Activated CD4-positive, alpha-beta T cell treated with anti-CD3 and anti-CD28 coated beads for 36 hours (primary cell): ENCODE measurements at regions of chr17 and their contacts with region 1.

Region 1: DNA sequence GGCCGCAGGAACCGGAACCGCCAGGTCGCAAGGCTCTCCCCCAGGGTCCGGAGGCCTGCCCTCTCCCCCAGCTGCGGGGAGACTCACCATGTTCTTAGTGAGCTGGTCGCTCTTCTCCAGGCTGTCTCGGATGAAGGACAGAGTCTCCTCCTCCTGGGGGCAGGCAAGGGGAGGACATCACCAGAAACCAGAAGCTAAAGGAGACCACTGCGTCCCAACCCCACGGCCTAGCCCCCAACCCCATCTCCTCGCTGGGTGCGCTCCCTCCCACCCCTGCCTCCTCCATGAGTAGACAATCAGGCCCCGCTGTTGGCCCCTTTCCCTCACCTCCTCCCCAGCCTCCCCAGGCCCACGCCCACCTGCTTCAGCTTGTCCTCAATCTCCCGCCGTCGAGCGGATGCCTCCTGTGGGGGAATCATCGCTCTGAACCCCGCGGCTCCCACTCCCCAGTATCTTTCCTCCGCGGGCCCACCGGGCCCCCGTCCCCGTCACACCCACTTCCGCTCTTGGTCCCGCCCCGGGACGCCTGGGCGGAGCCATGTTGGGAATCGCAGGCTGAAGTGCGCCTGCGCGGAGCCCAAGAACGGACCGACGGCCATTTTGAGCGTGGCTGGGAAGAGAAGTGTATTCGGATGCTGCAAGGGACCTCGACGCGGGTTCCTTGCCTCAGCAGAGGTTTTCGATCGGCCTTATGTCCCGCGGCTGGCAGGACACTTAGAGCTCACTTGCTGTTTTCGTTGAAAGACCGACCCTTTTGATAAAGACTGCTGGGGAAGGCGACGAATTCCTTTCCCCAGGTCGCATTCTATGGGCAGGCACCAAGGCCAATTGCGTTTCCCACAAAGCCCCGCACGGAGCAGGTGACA is at the start of gene EXOC7:
- DNase-seq: peak; percentile 96
- ATAC-seq: peak; percentile 94
- H3K4me3 Mint-ChIP-seq: peak within 1 kb of the TSS; percentile 90
- H3K27ac Mint-ChIP-seq: peak within 1 kb of the TSS; percentile 93
- H3K4me1 Mint-ChIP-seq: peaks cover 18% of the 10 kb centered on the region
- H3K27me3 Mint-ChIP-seq: no peaks in the 10 kb centered on the region
- total RNA-seq, gene EXOC7: 73.0 to 77.0 TPM

Region 2: GRCh38 chr17:76036497-76037261 is 66.8 kb before region 1 on chr17:
- CTCF ChIA-PET with region 1: no interaction called
- POLR2A ChIA-PET with region 1: no interaction called
- intact Hi-C with region 1: no loop called
- DNase-seq: no peak
- ATAC-seq: no peak
- H3K4me3 Mint-ChIP-seq: no peak overlapping the region
- H3K27ac Mint-ChIP-seq: no peak overlapping the region
- H3K4me1 Mint-ChIP-seq: peaks cover 3% of the 10 kb centered on the region
- H3K27me3 Mint-ChIP-seq: no peaks in the 10 kb centered on the region

Region 3: GRCh38 chr17:76501018-76501826 is 397.7 kb after region 1 on chr17 and contains the start of gene RHBDF2:
- CTCF ChIA-PET with region 1: no interaction called
- POLR2A ChIA-PET with region 1: no interaction called
- intact Hi-C with region 1: loop called in 1 of 2 experiments (anchors 10 kb)
- DNase-seq: peak; percentile 98
- ATAC-seq: peak; percentile 91
- H3K4me3 Mint-ChIP-seq: peak within 1 kb of the TSS; percentile 87
- H3K27ac Mint-ChIP-seq: peak within 1 kb of the TSS; percentile 94
- H3K4me1 Mint-ChIP-seq: peaks cover 29% of the 10 kb centered on the region
- H3K27me3 Mint-ChIP-seq: no peaks in the 10 kb centered on the region
- total RNA-seq, gene RHBDF2: 23.9 to 28.4 TPM